Stomach (tissue), 19 donors: ENCODE measurements at regions of chr11 and their contacts with region 1.

Region 1: GRCh38 chr11:45102810-45103621 is 43.4 kb upstream of the PRDM11 start:
- DNase-seq: peak; percentile 54 to 89
- H3K4me3 ChIP-seq: no peak overlapping the region
- H3K27ac ChIP-seq: no peak overlapping the region
- H3K4me1 ChIP-seq: peaks cover 4 to 14% (median 10%) of the 10 kb centered on the region in 4 donors
- H3K27me3 ChIP-seq: peaks cover 0 to 32% (median 4%) of the 10 kb centered on the region in 3 donors
- CTCF ChIP-seq: peak in 5 of 7 experiments; percentile 88 to 98 (median 95)
- EP300 ChIP-seq: no peak
- POLR2A ChIP-seq: no peak

Region 2: DNA sequence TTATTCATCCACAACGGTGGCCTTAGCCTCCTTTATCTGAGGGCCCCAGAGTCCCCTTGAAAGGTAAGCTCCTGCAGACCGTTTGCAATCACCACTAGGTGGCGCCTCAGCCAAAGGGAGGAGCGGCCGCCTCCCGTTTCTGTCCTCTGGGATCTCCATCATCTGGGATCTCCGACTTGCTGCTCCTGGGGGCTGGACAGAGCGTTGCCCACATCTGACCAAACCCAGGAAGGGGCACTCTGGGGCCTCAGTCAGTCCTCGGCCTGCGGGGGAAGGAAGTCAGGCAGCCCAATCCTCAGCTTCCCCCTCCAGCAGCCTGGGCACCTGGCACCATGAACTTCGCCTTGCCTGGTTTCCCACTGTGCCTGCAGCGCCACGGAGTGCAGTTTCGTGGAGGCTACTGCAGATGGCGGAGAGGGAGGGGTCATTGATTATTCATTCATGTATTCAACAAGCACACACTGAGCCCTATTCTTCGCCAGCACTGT is 175.8 kb before region 1 on chr11:
- intact Hi-C with region 1: loop called (anchors 5 kb)
- DNase-seq: peak; percentile 74 to 87
- H3K4me3 ChIP-seq: no peak overlapping the region
- H3K27ac ChIP-seq: no peak overlapping the region
- H3K4me1 ChIP-seq: peaks cover 0 to 9% (median 2%) of the 10 kb centered on the region in 4 donors
- H3K27me3 ChIP-seq: peaks cover 0 to 7% (median 0%) of the 10 kb centered on the region in 3 donors
- CTCF ChIP-seq: peak in 5 of 7 experiments; percentile 69 to 89 (median 81)
- EP300 ChIP-seq: no peak
- POLR2A ChIP-seq: no peak

Region 3: DNA sequence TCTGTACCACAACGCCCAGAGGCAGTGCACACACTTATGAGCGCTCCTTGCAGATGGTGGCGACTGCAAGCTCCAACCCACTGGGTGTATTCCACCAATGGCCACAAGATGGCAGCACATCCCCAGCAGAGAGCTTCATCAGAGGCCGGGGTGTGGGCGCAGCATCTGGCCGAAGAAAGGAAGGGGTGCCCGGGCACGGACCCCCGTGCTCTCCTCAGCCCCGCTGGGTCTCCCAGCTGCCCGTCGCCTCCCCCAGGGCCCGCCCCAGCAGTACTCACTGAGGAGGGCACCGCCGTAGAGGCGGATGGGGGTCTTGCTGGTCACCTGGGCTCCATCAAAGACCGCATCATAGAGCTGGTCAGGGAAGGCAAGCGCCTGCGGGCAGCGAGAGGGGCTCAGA is 166.5 kb before region 1 on chr11:
- intact Hi-C with region 1: loop called (anchors 5 kb)
- DNase-seq: peak; percentile 89 to 95
- H3K4me3 ChIP-seq: no peak overlapping the region
- H3K27ac ChIP-seq: no peak overlapping the region
- H3K4me1 ChIP-seq: peaks cover 0 to 33% (median 14%) of the 10 kb centered on the region in 4 donors
- H3K27me3 ChIP-seq: no peaks in the 10 kb centered on the region
- CTCF ChIP-seq: peak in 6 of 7 experiments; percentile 52 to 97 (median 95)
- EP300 ChIP-seq: no peak
- POLR2A ChIP-seq: no peak

Region 4: DNA sequence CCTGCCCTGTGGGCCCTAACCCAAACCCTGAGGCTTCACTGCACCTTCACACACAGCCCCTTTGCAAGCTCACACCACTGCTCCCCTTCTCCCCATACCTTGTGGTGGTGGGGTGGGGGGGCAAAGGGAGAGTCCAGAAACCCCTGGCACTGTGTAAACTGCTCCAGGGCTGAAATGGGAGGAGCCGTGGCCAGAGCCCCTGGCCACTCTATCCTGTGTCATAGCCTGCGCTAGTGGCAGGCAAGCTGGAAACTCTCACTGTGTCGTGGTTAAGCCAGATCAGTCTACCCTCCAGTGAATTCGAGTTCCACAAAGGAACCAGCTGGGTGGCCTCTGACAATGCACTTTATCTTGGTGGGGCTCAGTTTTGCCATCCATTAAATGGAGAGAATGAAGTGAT is 191.5 kb after region 1 on chr11:
- intact Hi-C with region 1: loop called (anchors 5 kb)
- DNase-seq: no peak
- H3K4me3 ChIP-seq: no peak overlapping the region
- H3K27ac ChIP-seq: no peak overlapping the region
- H3K4me1 ChIP-seq: no peaks in the 10 kb centered on the region
- H3K27me3 ChIP-seq: peaks cover 0 to 28% (median 0%) of the 10 kb centered on the region in 3 donors
- CTCF ChIP-seq: no peak
- EP300 ChIP-seq: no peak
- POLR2A ChIP-seq: no peak